HCT116 (cell line): ENCODE measurements at regions of chr22 and their contacts with region 1.

Region 1: DNA sequence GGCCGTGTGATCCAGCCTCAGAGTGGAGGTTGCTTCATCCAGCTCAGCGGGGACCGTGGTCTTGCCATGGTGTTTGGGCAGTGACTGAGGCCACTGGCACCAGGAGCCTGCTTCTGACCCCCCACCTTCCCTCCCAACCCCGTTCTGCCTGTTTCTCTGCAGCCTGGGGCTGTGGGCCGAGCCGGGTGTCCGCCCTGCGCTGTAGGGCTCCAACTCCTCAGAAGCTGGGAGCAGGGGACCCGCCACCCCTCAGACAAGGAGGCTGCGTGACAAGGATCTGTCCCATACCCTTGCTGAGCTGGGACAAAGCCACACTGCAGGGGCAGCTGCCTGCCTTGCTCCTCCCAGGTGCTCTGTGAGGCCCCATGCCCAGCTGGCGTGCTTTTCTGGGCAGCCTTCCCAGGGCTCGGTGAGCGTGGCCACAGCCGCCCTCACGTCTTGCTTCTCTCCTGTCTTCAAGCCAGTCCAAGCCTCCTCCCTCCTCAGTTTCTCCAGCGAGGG is 11.7 kb upstream of the ARFGAP3 start:
- DNase-seq: no peak
- ATAC-seq: no peak
- H3K4me3 ChIP-seq: no peak overlapping the region
- H3K27ac ChIP-seq: peak overlapping the region; percentile 7; the same call in 1 of the 2 replicates
- H3K4me1 ChIP-seq: peaks cover 0 to 14% of the 10 kb centered on the region in 2 experiments; a peak in 3 of 4 replicates
- H3K27me3 ChIP-seq: no peaks in the 10 kb centered on the region
- CTCF ChIP-seq: no peak
- POLR2A ChIP-seq: no peak
- RAD21 ChIP-seq: no peak

Region 2: GRCh38 chr22:42780070-42780540 is 88.7 kb before region 1 on chr22:
- CTCF ChIA-PET with region 1: interaction called, 3 read pairs
- POLR2A ChIA-PET with region 1: no interaction called
- RAD21 ChIA-PET with region 1: interaction called, 3 to 4 read pairs
- intact Hi-C with region 1: loop called (anchors 5 kb)
- DNase-seq: peak; percentile 95
- ATAC-seq: peak; percentile 94
- H3K4me3 ChIP-seq: no peak overlapping the region
- H3K27ac ChIP-seq: no peak overlapping the region
- H3K4me1 ChIP-seq: peaks cover 2 to 3% of the 10 kb centered on the region in 2 experiments; a peak in 3 of 4 replicates
- H3K27me3 ChIP-seq: no peaks in the 10 kb centered on the region
- CTCF ChIP-seq: peak; percentile 79 to 98 (median 86)
- POLR2A ChIP-seq: no peak
- RAD21 ChIP-seq: peak; percentile 86

Region 3: GRCh38 chr22:43001271-43002201 is 132.7 kb after region 1 on chr22:
- CTCF ChIA-PET with region 1: no interaction called
- POLR2A ChIA-PET with region 1: no interaction called
- RAD21 ChIA-PET with region 1: no interaction called
- intact Hi-C with region 1: no loop called
- DNase-seq: no peak
- ATAC-seq: no peak
- H3K4me3 ChIP-seq: no peak overlapping the region
- H3K27ac ChIP-seq: peak overlapping the region; percentile 39; the same call in 1 of the 2 replicates
- H3K4me1 ChIP-seq: peaks cover 53 to 76% of the 10 kb centered on the region in 2 experiments
- H3K27me3 ChIP-seq: no peaks in the 10 kb centered on the region
- CTCF ChIP-seq: no peak
- POLR2A ChIP-seq: no peak
- RAD21 ChIP-seq: no peak